ENCODE measurements at regions of chr1 and their contacts with region 1.

Region 1: DNA sequence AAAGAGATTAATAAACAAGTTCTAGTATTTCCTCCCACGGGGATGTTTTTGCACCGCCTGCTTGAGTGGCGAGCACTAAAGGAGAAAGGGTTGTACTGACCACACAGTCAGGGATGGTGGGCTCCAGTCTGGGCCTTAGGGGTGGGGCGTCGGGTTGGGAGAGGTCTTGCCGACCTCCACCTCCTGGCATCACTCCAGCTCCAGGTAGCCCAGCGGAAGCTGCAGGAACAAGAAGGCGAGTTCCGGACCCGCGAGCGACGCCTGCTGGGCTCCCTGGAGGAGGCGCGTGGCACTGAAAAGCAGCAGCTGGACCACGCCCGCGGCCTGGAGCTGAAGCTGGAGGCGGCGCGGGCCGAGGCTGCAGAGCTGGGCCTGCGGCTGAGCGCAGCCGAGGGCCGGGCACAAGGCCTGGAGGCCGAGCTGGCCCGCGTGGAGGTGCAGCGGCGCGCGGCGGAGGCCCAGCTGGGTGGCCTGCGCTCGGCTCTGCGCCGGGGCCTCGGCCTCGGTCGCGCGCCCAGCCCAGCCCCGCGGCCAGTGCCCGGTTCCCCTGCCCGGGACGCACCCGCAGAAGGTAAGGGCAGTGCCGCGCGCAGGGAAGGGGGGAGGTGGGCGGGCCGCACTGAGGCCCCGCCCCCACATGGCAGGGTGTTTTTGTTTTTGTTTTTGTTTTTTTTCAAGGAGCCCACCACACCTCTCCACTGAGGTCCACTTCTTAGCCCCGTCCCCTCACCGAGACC is 19.7 kb downstream of the MFAP2 start:
- DNase-seq: no peak
- H3K4me3 ChIP-seq: peak overlapping the region; percentile 40
- H3K27ac ChIP-seq: no peak overlapping the region
- H3K27me3 ChIP-seq: no peaks in the 10 kb centered on the region
- CTCF ChIP-seq: peak; percentile 77

Region 2: GRCh38 chr1:16971341-16972188 is 10.8 kb after region 1 on chr1:
- CTCF ChIA-PET with region 1: interaction called, 17 read pairs
- POLR2A ChIA-PET with region 1: no interaction called
- DNase-seq: no peak
- H3K4me3 ChIP-seq: no peak overlapping the region
- H3K27ac ChIP-seq: no peak overlapping the region
- H3K27me3 ChIP-seq: no peaks in the 10 kb centered on the region
- CTCF ChIP-seq: no peak

Region 3: DNA sequence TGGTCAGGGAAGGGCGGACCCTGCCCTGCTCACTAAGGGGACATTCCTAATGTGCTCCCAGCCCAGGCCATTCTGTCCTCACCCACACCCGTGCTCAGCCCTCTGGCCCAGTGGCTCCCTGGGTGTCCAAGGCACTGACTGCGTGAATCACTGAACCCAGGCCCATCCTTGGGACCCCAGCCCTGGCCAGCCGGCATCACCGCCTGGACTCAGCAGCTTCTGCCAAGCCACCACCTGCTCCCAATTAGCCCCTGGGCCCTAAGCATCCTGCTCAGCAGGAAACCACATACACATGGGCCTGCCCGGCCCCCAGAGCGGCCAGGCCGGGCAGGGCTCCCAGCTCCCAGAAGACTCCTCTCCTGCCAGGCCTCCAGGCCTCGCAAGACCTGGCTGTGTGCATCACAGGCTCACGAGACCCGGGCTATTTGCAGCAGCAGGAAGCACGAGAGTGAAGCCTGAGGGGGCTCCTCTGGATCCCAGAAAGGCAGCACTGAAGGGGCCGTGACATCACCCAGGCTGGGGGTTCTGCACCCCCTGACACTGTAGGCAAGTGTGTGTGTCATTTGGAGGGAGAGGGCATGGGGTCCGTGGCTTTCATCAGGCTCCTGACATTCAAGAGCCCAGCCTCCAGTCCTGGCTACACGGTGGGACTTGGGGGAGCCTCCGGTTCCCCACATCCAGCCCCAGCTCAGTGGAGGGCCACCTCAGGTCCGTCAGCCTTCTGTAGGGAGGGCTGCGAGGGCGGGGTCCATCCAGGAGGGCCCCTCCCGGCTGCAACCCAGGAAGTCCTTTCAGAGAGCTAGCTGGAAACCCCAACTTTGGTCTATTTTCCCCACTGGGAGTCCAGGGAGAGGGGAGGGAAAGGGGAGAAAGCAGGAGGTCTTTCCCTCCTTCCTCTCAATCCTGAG is 18.1 kb after region 1 on chr1:
- CTCF ChIA-PET with region 1: interaction called, 13 read pairs
- POLR2A ChIA-PET with region 1: interaction called, 4 read pairs
- DNase-seq: peak; percentile 82
- H3K4me3 ChIP-seq: peak overlapping the region; percentile 72
- H3K27ac ChIP-seq: peak overlapping the region; percentile 87
- H3K27me3 ChIP-seq: no peaks in the 10 kb centered on the region
- CTCF ChIP-seq: no peak